Ascending aorta (tissue), 2 donors: ENCODE measurements at regions of chr3 and their contacts with region 1.

Region 1: GRCh38 chr3:27632431-27633223 is 89.5 kb downstream of the EOMES start:
- DNase-seq: peak in 1 of 2 donors; percentile 78
- H3K4me3 ChIP-seq: peak overlapping the region; percentile 63 to 83
- H3K27ac ChIP-seq: peak overlapping the region; percentile 84 to 91
- H3K4me1 ChIP-seq: peaks cover 4 to 19% of the 10 kb centered on the region in 2 donors
- H3K27me3 ChIP-seq: no peaks in the 10 kb centered on the region
- CTCF ChIP-seq: no peak

Region 2: DNA sequence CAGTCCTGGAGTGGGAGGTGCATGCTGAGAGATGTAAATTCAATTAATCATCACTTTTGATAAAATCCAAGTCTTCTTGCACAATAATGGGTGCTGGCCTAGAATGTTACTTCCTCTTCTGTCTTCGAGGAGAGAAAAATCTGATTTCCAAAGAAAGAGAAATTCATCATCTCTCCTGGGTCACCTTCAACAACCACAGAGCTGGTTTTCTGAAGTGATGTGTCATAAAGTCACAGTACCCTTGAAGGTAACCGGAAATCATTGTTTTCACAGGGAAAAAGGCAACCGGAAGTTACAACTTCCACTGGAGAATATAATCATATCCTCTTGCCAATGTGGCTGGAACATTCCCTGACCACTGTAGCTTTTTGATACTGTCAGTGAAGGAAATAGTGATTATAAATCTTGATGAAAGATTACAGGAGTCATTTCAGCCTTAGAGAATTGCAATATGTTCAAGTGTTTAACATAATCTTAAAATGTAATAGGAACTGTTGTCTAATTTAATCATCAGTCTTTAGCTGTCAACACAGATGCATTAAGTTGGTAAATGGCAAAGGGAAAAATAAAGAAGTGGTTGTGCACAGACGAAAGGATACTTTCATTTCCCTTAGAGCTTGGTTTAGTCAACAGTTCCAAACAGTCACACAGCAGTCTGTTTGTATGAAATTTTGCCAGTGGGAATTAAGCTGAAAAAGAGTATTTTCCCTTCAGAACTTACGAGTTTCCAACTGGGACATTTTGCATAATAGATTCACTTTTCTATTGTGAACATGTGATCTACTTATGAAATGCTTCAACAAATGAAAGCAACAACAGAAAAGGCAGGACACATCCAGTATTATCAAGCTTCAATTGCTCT is 42.0 kb before region 1 on chr3:
- intact Hi-C with region 1: loop called (anchors 5 kb)
- DNase-seq: no peak
- H3K4me3 ChIP-seq: peak overlapping the region; percentile 5 to 16
- H3K27ac ChIP-seq: peak overlapping the region; percentile 76 to 81
- H3K4me1 ChIP-seq: peaks cover 3 to 25% of the 10 kb centered on the region in 2 donors
- H3K27me3 ChIP-seq: no peaks in the 10 kb centered on the region
- CTCF ChIP-seq: no peak

Region 3: DNA sequence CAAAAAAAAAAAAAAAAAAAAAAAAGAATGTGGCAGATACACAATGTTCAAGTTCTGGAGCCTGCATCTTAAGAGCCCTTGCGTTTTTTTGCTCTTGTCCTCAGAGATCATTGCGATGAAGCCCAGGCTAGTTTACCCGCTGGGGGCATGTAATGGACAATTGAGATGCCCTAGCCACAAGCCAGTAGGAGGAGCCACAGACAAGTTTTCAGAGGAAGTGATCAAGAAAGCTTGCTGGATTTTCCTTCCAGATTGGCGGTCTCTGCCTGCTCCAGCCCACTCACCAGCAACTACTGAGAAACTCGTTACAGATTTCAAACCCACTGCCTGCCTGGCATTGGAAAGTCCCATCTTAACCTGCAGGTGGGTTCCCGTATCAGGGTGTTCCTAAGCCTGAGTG is 281.6 kb after region 1 on chr3:
- intact Hi-C with region 1: no loop called
- DNase-seq: no peak
- H3K4me3 ChIP-seq: no peak overlapping the region
- H3K27ac ChIP-seq: no peak overlapping the region
- H3K4me1 ChIP-seq: no peaks in the 10 kb centered on the region
- H3K27me3 ChIP-seq: no peaks in the 10 kb centered on the region
- CTCF ChIP-seq: no peak